Activated T-helper 1 cell treated with anti-CD3 and anti-CD28 coated beads, Interleukin-12 subunit alpha, Interleukin-12 subunit beta, Interleukin-2, Interleukin-4 antibody, amounts not matched to agents 30 ng/mL and 10 ng/mL and 1 ng/mL, durations not matched to agents 14 hours and 24 hours and 36 hours (primary cell): ENCODE measurements at regions of chr12 and their contacts with region 1.

Region 1: GRCh38 chr12:108950991-108951739 is 69.7 kb downstream of the SVOP start:
- DNase-seq: peak; percentile 50
- H3K4me3 Mint-ChIP-seq: no peak overlapping the region
- H3K27ac Mint-ChIP-seq: no peak overlapping the region
- H3K4me1 Mint-ChIP-seq: peaks cover 7% of the 10 kb centered on the region
- H3K27me3 Mint-ChIP-seq: peaks cover 17% of the 10 kb centered on the region

Region 2: DNA sequence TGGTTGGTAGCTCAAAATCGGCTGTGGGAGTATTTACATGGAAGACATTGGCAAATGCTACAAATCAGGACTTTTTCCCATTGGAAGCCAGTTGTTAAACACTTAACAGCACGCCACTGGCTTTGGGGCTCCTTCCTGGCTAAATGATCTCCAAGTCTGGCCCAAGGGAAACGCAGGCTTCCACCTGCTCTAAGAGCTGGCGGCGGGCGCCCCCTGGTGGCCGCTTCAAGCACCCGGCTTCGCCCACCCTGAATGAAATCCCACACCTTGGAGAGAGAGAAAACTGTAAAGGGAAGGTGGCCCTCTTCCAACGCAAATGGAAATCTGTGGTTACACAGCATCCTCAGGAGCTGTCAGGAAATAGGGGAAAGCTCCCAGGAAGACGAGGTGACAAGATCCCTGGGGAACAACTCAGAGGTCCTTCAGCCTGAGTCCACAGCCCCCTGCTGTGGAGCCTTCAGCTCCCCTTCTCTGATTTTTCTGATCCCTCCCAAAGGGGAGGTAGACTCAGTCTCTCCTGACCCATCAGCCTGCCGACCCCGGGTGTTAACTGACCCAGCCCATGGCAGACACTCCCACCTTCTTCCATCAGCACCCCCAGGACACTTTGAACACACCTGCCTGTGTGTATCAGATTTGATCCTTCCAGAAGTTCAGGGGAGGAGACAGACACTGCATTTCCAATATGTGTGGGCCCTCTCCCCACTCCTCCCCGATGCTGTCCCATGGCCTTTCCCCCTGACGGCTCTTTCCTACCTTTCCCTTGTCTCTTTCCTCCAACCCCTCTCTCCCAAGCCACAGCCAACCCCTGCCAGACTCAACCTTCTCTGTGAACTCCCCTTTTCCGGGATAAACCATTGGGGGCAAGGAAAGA is 332.8 kb before region 1 on chr12:
- intact Hi-C with region 1: loop called (anchors 1 kb)
- DNase-seq: peak; percentile 69
- H3K4me3 Mint-ChIP-seq: no peak overlapping the region
- H3K27ac Mint-ChIP-seq: peak overlapping the region; percentile 57
- H3K4me1 Mint-ChIP-seq: peaks cover 57% of the 10 kb centered on the region
- H3K27me3 Mint-ChIP-seq: peaks cover 2% of the 10 kb centered on the region

Region 3: GRCh38 chr12:108664338-108665258 is 286.6 kb before region 1 on chr12:
- intact Hi-C with region 1: loop called (anchors 1 kb)
- DNase-seq: peak; percentile 79
- H3K4me3 Mint-ChIP-seq: no peak overlapping the region
- H3K27ac Mint-ChIP-seq: peak overlapping the region; percentile 72
- H3K4me1 Mint-ChIP-seq: peaks cover 17% of the 10 kb centered on the region
- H3K27me3 Mint-ChIP-seq: no peaks in the 10 kb centered on the region

Region 4: DNA sequence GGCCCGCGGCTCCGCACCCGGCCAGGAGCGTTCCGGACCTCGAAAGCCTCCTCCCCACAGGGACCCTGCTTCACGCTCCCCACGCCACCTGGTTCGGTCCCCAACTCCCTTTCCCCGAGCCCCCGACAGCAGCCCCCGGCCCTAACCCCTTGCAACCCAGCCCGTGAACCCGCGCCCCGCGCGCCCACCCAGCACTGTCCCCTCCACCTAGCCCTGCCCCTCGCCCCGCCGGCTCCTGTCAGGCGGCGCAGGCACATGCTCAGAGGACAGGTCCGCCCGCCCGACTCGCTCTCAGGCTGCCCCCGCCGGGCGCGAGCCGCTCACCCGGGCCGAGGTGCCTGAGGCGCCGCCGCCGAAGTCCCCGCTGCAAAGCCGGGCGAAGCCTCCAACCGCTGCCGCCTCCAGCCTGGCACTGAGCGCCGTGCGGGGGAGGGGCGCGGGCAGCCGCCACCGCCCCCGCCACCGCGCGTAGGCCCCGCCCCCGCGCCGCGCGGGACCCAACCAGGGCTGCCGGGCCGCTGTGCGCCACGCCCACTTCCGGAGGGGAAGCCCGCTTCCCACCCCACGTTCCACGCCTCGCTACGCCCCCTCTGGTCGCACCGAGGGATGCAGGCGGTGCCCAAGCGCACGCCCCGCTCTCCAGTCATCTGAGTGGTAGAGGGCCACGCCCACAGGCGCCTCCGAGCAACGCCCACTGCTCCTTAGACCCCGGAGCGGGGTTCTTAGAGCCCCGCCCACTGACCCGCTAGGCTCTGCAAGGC is 219.9 kb before region 1 on chr12 and contains the start of gene CORO1C:
- intact Hi-C with region 1: loop called (anchors 5 kb)
- DNase-seq: peak; percentile 96
- H3K4me3 Mint-ChIP-seq: peak within 1 kb of the TSS; percentile 89
- H3K27ac Mint-ChIP-seq: peak within 1 kb of the TSS; percentile 94
- H3K4me1 Mint-ChIP-seq: peaks cover 38% of the 10 kb centered on the region
- H3K27me3 Mint-ChIP-seq: peaks cover 16% of the 10 kb centered on the region
- total RNA-seq, gene CORO1C: 46.1 and 49.7 TPM in 2 replicates

Region 5: DNA sequence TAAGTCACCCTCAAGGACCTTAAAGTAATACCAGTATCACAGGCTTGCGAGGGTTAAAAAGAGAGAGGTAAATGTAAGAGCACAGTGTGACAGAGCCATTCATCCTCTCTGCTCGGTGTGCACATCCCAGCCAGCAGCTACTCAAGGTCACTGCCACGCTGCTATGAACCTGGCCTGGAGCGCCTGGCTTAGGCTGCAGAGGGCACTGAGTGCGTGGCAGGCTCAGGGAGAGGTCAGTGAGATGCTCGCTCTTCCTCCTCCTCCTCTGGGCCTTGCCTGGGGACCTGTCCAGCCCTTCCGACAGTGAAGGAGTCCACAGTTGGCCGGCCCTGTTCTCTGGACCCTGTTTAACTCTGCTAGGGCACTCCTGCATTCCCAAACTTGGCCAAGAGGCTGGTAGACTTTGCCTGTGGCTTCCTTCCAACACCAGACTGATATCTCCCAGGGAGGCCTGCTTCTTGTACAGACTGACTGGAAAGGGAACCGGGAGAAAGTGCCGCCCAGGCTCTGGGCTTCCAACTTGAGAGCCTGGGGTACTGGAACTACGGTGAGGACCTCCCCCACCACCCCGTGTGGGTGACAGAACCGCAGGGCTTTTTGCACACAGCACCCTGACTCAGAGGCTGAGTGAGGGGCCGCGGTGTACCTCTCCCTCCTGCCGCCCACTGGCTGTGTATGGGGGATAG is 157.3 kb before region 1 on chr12:
- intact Hi-C with region 1: no loop called
- DNase-seq: no peak
- H3K4me3 Mint-ChIP-seq: no peak overlapping the region
- H3K27ac Mint-ChIP-seq: no peak overlapping the region
- H3K4me1 Mint-ChIP-seq: peaks cover 5% of the 10 kb centered on the region
- H3K27me3 Mint-ChIP-seq: no peaks in the 10 kb centered on the region

Region 6: GRCh38 chr12:108884116-108885012 is 66.8 kb before region 1 on chr12:
- intact Hi-C with region 1: loop called (anchors 1 kb)
- DNase-seq: peak; percentile 25
- H3K4me3 Mint-ChIP-seq: no peak overlapping the region
- H3K27ac Mint-ChIP-seq: no peak overlapping the region
- H3K4me1 Mint-ChIP-seq: no peaks in the 10 kb centered on the region
- H3K27me3 Mint-ChIP-seq: peaks cover 7% of the 10 kb centered on the region